ENCODE measurements at regions of chr6 and their contacts with region 1.

Region 1: GRCh38 chr6:122459213-122459612 is 12.4 kb downstream of the SERINC1 start:
- DNase-seq: no peak
- ATAC-seq: peak; percentile 12
- H3K4me3 ChIP-seq: no peak overlapping the region
- H3K4me3 Mint-ChIP-seq: peak overlapping the region in 8 of 10 donors; percentile 35 to 98 (median 48)
- H3K27ac ChIP-seq: peak overlapping the region; percentile 41
- H3K27ac Mint-ChIP-seq: peak overlapping the region in 8 of 9 donors; percentile 3 to 83 (median 52)
- H3K4me1 ChIP-seq: peaks cover 57 to 60% of the 10 kb centered on the region in 2 donors
- H3K4me1 Mint-ChIP-seq: peaks cover 33 to 98% (median 87%) of the 10 kb centered on the region in 7 donors
- H3K27me3 ChIP-seq: no peaks in the 10 kb centered on the region
- H3K27me3 Mint-ChIP-seq: no peaks in the 10 kb centered on the region

Region 2: DNA sequence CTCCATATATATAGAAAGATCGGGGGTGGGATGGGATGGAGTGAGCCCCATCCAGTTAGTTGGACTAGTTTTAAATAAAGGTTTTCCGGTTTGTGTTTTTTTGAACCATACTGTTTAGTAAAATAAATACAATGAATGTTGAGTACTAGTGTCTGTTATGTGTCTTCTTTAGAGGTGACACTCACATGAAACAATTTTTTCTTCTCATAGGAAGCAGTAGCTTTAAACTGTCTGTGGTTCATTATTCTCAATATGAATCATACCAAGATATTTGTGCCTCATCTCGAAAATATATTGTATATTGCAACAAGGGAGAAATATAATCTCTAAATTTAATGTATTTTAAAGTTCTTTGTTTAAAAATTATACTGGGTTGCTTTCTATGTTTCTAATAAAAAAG is 26.4 kb before region 1 on chr6:
- CTCF ChIA-PET with region 1: no interaction called
- POLR2A ChIA-PET with region 1: no interaction called
- intact Hi-C with region 1: loop called in 1 of 2 experiments (anchors 2 kb)
- DNase-seq: no peak
- ATAC-seq: no peak
- H3K4me3 ChIP-seq: no peak overlapping the region
- H3K4me3 Mint-ChIP-seq: no peak overlapping the region
- H3K27ac ChIP-seq: no peak overlapping the region
- H3K27ac Mint-ChIP-seq: peak overlapping the region in 6 of 9 donors; percentile 14 to 76 (median 62)
- H3K4me1 ChIP-seq: no peaks in the 10 kb centered on the region
- H3K4me1 Mint-ChIP-seq: peaks cover 0 to 20% (median 4%) of the 10 kb centered on the region in 7 donors
- H3K27me3 ChIP-seq: no peaks in the 10 kb centered on the region
- H3K27me3 Mint-ChIP-seq: no peaks in the 10 kb centered on the region

Region 3: GRCh38 chr6:122449069-122449468 is 10.1 kb before region 1 on chr6:
- CTCF ChIA-PET with region 1: no interaction called
- POLR2A ChIA-PET with region 1: interaction called, 5 read pairs
- intact Hi-C with region 1: loop called in 1 of 2 experiments (anchors 2 kb)
- DNase-seq: no peak
- ATAC-seq: no peak
- H3K4me3 ChIP-seq: no peak overlapping the region
- H3K4me3 Mint-ChIP-seq: no peak overlapping the region
- H3K27ac ChIP-seq: no peak overlapping the region
- H3K27ac Mint-ChIP-seq: peak overlapping the region in 8 of 9 donors; percentile 4 to 78 (median 48)
- H3K4me1 ChIP-seq: no peaks in the 10 kb centered on the region
- H3K4me1 Mint-ChIP-seq: peaks cover 0 to 57% (median 36%) of the 10 kb centered on the region in 7 donors
- H3K27me3 ChIP-seq: no peaks in the 10 kb centered on the region
- H3K27me3 Mint-ChIP-seq: no peaks in the 10 kb centered on the region

Region 4: GRCh38 chr6:123564363-123564762 is 1105.2 kb after region 1 on chr6:
- CTCF ChIA-PET with region 1: no interaction called
- POLR2A ChIA-PET with region 1: no interaction called
- intact Hi-C with region 1: no loop called
- DNase-seq: no peak
- ATAC-seq: no peak
- H3K4me3 ChIP-seq: no peak overlapping the region
- H3K4me3 Mint-ChIP-seq: no peak overlapping the region
- H3K27ac ChIP-seq: no peak overlapping the region
- H3K27ac Mint-ChIP-seq: no peak overlapping the region
- H3K4me1 ChIP-seq: no peaks in the 10 kb centered on the region
- H3K4me1 Mint-ChIP-seq: no peaks in the 10 kb centered on the region
- H3K27me3 ChIP-seq: no peaks in the 10 kb centered on the region
- H3K27me3 Mint-ChIP-seq: no peaks in the 10 kb centered on the region